ENCODE measurements at regions of chr16 and their contacts with region 1.

Region 1: DNA sequence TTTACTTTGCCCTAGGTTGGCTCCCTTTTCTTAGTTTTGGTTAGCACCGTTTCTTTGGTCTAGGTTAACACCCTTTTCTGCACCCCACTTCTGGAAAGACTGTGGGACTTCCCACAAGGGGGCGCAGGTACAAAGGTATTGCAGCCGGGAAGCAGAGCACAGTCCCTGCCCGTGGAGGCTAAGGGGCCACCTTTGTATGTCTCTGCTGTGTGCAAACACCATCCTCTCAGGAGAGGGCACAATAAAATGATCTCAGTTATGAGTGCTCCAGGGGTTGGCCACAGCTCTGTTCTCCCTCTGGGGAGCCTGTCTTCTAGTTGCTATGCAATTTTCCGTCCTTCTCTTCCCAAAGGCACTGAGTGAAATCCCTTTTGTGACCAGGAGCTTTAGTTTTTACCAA is 28.4 kb upstream of the TMC5 start:
- DNase-seq: peak; percentile 67
- H3K4me3 Mint-ChIP-seq: no peak overlapping the region
- H3K27ac Mint-ChIP-seq: no peak overlapping the region
- H3K4me1 Mint-ChIP-seq: no peaks in the 10 kb centered on the region
- H3K27me3 Mint-ChIP-seq: peaks cover 18% of the 10 kb centered on the region

Region 2: DNA sequence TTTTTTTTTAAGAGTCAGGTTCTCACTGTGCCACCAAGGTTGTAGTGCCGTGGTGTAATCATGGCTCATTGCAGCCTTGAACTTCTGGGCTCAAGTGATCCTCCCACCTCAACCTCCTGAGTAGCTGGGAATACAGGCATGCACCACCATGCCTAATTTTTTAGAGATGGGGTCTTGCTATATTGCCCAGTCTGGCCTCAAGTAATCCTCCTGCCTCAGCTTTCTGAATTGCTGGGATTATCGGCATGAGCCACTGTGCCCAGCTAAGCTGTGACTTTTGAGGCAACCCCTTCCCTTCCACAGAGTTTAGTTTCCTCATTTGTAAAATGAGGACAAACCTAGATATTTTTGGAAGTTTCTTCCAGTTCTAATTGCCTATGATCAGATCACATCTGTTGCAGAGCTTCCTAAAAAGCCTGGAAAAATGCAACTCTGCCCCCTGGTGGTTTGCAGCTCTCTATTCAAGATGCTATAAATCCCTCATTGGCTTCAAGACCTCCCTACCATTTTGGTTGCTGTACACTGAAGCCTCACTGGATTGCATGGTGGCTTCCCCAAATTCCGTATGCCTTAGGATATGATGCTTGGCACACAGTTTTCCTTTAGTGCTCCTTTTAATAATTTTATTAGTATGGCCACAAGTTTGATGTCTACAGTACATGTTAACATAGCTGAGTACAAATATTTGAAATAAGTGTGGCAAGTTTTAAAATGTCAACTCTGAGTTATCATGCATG is 113.3 kb after region 1 on chr16:
- CTCF ChIA-PET with region 1: interaction called, 18 read pairs
- intact Hi-C with region 1: loop called (anchors 1 kb)
- DNase-seq: peak; percentile 83
- H3K4me3 Mint-ChIP-seq: no peak overlapping the region
- H3K27ac Mint-ChIP-seq: no peak overlapping the region
- H3K4me1 Mint-ChIP-seq: no peaks in the 10 kb centered on the region
- H3K27me3 Mint-ChIP-seq: no peaks in the 10 kb centered on the region

Measured in activated naive CD4-positive, alpha-beta T cell treated with anti-CD3 and anti-CD28 coated beads for 36 hours (primary cell).